Lower lobe of right lung (tissue), 2 donors: ENCODE measurements at regions of chr6 and their contacts with region 1.

Region 1: GRCh38 chr6:106568530-106568929 is 60.8 kb downstream of the RTN4IP1 start:
- DNase-seq: no peak
- ATAC-seq: no peak
- H3K4me3 ChIP-seq: no peak overlapping the region
- H3K27ac ChIP-seq: no peak overlapping the region
- H3K4me1 ChIP-seq: no peaks in the 10 kb centered on the region
- H3K27me3 ChIP-seq: no peaks in the 10 kb centered on the region
- CTCF ChIP-seq: no peak

Region 2: DNA sequence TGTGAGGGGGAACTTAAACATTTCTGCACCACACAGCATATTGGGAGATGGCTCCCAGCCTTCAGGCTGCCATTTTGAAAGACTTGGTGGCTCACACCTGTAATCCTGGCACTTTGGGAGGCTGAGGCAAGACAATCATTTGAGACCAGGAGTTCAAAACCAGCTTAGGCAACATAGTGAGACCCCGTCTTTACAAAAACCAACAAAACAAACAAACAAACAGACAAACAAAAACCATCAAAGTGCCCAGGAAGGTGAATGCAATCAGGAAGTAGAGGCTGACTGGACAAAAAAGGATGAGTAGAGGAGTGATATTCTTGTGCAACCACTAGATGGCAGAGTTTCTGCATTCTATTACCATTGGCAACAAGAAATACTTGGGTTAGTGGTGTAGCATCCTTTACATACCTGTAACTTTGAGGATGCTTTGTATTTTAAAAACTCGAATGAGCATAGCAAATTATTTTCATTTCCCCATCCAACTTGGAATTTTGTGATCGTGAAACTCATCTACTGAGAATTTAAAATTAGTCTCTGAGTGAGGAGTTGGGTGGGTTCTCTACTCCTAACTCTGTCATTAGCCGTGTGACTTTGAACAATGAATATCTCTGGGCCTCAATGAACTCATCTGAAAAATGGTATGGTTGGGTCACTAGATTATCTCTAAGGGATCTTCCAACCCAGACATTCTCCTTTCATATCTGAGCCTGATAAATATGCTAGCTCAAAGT is 123.6 kb before region 1 on chr6:
- intact Hi-C with region 1: loop called (anchors 5 kb)
- DNase-seq: no peak
- ATAC-seq: peak; percentile 85
- H3K4me3 ChIP-seq: no peak overlapping the region
- H3K27ac ChIP-seq: no peak overlapping the region
- H3K4me1 ChIP-seq: peaks cover 6% of the 10 kb centered on the region
- H3K27me3 ChIP-seq: no peaks in the 10 kb centered on the region
- CTCF ChIP-seq: peak; percentile 72